ENCODE measurements at regions of chr2 and their contacts with region 1.

Region 1: DNA sequence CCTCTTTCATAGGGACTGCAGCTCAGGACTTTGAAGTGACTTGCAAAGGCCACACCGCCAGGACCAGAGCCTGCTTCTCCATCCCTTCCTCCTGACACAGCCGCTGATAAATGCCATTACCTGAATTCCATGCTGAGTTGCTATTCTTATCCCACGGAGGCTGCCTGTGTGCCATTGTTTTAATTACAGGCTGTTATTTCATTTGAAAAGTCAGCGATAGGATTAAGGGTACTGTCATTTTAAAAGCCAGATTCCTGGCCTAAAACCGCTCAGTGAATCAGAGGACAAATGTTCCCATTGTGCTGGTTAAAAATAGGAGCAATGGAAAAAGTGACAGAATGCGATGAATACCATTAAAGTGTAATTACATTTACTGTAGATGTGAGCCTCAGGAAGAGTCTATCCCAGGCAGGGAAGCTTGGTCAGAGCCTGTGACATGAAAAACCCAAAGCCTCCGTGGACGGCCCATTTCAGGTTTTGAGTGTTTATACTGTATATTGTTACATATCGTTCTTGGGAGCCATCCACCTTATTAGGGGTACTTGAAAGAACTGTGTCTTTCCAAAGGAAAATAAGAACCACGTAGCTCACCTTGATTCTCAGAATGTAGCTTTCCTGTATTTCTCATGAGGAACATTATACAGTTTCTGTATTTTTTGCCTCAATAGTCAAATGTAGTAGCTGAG is 41.3 kb downstream of the PDCL3 start:
- DNase-seq: no peak
- H3K4me3 ChIP-seq: no peak overlapping the region
- H3K4me3 Mint-ChIP-seq: no peak overlapping the region
- H3K27ac Mint-ChIP-seq: no peak overlapping the region
- H3K4me1 ChIP-seq: no peaks in the 10 kb centered on the region
- H3K4me1 Mint-ChIP-seq: no peaks in the 10 kb centered on the region
- H3K27me3 ChIP-seq: no peaks in the 10 kb centered on the region
- H3K27me3 Mint-ChIP-seq: peaks cover 3% of the 10 kb centered on the region
- CTCF ChIP-seq: no peak

Region 2: DNA sequence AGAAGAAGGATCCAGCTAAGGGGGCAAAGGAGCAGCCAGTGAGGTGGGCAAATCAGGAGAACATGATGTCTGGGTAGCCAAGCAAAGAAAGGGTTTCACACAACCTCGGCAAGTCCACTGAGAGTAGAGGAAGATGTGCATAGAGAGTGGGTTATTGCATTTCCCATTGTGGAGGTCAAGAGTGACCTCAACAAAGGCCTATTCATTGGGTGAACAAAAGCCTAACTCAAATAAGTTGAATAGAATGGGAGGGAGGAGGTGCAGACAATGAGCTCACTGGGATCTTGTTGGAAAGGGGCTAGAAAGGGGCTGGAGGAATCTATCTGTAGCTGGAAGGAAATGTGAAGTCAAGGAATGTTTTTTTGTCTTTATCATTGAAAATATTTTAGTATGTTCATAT is 55.3 kb before region 1 on chr2:
- CTCF ChIA-PET with region 1: no interaction called
- POLR2A ChIA-PET with region 1: no interaction called
- intact Hi-C with region 1: no loop called
- DNase-seq: no peak
- H3K4me3 ChIP-seq: no peak overlapping the region
- H3K4me3 Mint-ChIP-seq: no peak overlapping the region
- H3K27ac Mint-ChIP-seq: no peak overlapping the region
- H3K4me1 ChIP-seq: no peaks in the 10 kb centered on the region
- H3K4me1 Mint-ChIP-seq: no peaks in the 10 kb centered on the region
- H3K27me3 ChIP-seq: no peaks in the 10 kb centered on the region
- H3K27me3 Mint-ChIP-seq: peaks cover 16% of the 10 kb centered on the region
- CTCF ChIP-seq: no peak

Region 3: GRCh38 chr2:100730346-100730745 is 126.3 kb after region 1 on chr2:
- CTCF ChIA-PET with region 1: interaction called, 12 read pairs
- POLR2A ChIA-PET with region 1: no interaction called
- intact Hi-C with region 1: no loop called
- DNase-seq: peak; percentile 49 to 55
- H3K4me3 ChIP-seq: no peak overlapping the region
- H3K4me3 Mint-ChIP-seq: no peak overlapping the region
- H3K27ac Mint-ChIP-seq: no peak overlapping the region
- H3K4me1 ChIP-seq: no peaks in the 10 kb centered on the region
- H3K4me1 Mint-ChIP-seq: no peaks in the 10 kb centered on the region
- H3K27me3 ChIP-seq: no peaks in the 10 kb centered on the region
- H3K27me3 Mint-ChIP-seq: peaks cover 14% of the 10 kb centered on the region
- CTCF ChIP-seq: peak; percentile 27 to 37

Region 4: DNA sequence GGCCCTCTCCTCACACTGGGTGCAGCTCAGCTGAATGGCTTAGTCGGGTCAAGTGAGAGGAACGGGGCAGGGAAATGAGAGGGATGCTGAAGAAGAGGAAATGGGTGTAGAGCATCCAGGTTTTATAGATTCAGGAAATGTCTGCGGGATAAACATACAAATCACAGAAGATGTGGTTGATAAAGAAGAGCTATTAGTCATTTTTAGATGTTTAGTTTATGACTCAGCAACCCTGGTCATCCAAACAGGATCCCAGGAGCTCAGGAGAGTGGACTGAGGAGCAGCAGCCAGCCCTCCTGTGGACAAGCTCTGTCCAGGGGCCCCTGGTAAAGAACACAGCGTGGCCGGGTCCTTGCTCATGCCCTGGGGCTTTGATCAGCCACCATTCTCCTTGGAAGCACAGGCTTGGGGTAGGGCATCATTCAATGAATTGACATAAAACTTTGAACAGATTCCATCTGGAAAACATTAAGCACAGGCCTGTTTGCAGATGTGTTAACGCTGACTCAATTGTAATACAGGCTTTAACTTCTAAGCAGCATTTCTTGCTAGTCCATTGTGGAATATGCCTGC is 298.8 kb after region 1 on chr2:
- CTCF ChIA-PET with region 1: no interaction called
- POLR2A ChIA-PET with region 1: no interaction called
- intact Hi-C with region 1: no loop called
- DNase-seq: peak in 1 of 2 experiments; percentile 10
- H3K4me3 ChIP-seq: no peak overlapping the region
- H3K4me3 Mint-ChIP-seq: no peak overlapping the region
- H3K27ac Mint-ChIP-seq: peak overlapping the region; percentile 26
- H3K4me1 ChIP-seq: peaks cover 17% of the 10 kb centered on the region
- H3K4me1 Mint-ChIP-seq: peaks cover 20% of the 10 kb centered on the region
- H3K27me3 ChIP-seq: no peaks in the 10 kb centered on the region
- H3K27me3 Mint-ChIP-seq: no peaks in the 10 kb centered on the region
- CTCF ChIP-seq: no peak

Measured in Caco-2 (cell line).